ENCODE measurements at regions of chr9 and their contacts with region 1.

Region 1: GRCh38 chr9:71333321-71333720 is 211.9 kb upstream of the TRPM3 start:
- DNase-seq: no peak
- ATAC-seq: no peak
- H3K4me3 ChIP-seq: no peak overlapping the region
- H3K4me3 Mint-ChIP-seq: no peak overlapping the region
- H3K27ac ChIP-seq: no peak overlapping the region
- H3K27ac Mint-ChIP-seq: no peak overlapping the region
- H3K4me1 ChIP-seq: no peaks in the 10 kb centered on the region
- H3K4me1 Mint-ChIP-seq: no peaks in the 10 kb centered on the region
- H3K27me3 ChIP-seq: peaks cover 2 to 5% of the 10 kb centered on the region in 2 experiments
- H3K27me3 Mint-ChIP-seq: peaks cover 9% of the 10 kb centered on the region
- CTCF ChIP-seq: no peak

Region 2: DNA sequence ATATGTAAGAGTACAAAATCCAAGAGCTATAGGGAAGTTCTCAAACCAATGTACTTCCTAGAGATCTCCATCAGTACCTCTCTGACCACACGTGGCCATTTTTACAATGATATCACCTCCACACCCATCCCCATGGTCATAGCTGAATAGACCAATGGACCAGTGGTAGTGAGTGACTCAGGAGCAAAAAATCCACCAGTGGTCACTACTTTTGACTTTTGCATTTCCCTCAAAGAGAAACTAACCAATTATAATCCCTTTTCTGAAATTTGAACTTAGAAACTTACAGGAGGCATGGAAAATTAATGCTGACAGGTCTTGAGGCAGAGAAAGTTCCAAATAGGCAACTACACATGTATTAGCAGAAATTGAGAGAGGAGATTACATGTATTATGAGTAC is 450.3 kb before region 1 on chr9:
- CTCF ChIA-PET with region 1: no interaction called
- POLR2A ChIA-PET with region 1: no interaction called
- intact Hi-C with region 1: no loop called
- DNase-seq: no peak
- ATAC-seq: no peak
- H3K4me3 ChIP-seq: no peak overlapping the region
- H3K4me3 Mint-ChIP-seq: no peak overlapping the region
- H3K27ac ChIP-seq: no peak overlapping the region
- H3K27ac Mint-ChIP-seq: no peak overlapping the region
- H3K4me1 ChIP-seq: no peaks in the 10 kb centered on the region
- H3K4me1 Mint-ChIP-seq: no peaks in the 10 kb centered on the region
- H3K27me3 ChIP-seq: no peaks in the 10 kb centered on the region
- H3K27me3 Mint-ChIP-seq: no peaks in the 10 kb centered on the region
- CTCF ChIP-seq: no peak

Region 3: GRCh38 chr9:71302776-71303175 is 30.5 kb before region 1 on chr9:
- CTCF ChIA-PET with region 1: no interaction called
- POLR2A ChIA-PET with region 1: no interaction called
- intact Hi-C with region 1: no loop called
- DNase-seq: no peak
- ATAC-seq: no peak
- H3K4me3 ChIP-seq: no peak overlapping the region
- H3K4me3 Mint-ChIP-seq: no peak overlapping the region
- H3K27ac ChIP-seq: no peak overlapping the region
- H3K27ac Mint-ChIP-seq: no peak overlapping the region
- H3K4me1 ChIP-seq: no peaks in the 10 kb centered on the region
- H3K4me1 Mint-ChIP-seq: no peaks in the 10 kb centered on the region
- H3K27me3 ChIP-seq: no peaks in the 10 kb centered on the region
- H3K27me3 Mint-ChIP-seq: peaks cover 12% of the 10 kb centered on the region
- CTCF ChIP-seq: no peak

Region 4: DNA sequence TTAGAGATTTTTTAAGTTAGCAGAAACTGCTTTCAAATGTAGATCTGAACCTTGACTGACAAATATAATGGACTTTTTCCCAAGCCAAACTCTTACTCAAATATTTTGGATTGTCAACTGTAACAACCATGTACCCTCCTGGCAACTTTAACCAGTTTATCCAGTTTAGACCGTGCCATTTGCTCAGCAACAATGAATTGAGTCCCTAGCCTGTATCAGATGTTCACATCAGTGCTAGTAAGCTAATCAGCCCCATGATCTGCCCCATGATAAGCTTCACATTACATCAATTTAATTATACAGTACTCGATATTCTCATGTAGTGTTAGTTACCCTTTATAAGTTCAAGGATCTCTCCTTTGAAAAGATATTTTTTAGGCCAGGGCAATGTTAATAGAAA is 64.5 kb after region 1 on chr9:
- CTCF ChIA-PET with region 1: no interaction called
- POLR2A ChIA-PET with region 1: no interaction called
- intact Hi-C with region 1: loop called in 1 of 2 experiments (anchors 10 kb)
- DNase-seq: no peak
- ATAC-seq: no peak
- H3K4me3 ChIP-seq: no peak overlapping the region
- H3K4me3 Mint-ChIP-seq: no peak overlapping the region
- H3K27ac ChIP-seq: no peak overlapping the region
- H3K27ac Mint-ChIP-seq: no peak overlapping the region
- H3K4me1 ChIP-seq: no peaks in the 10 kb centered on the region
- H3K4me1 Mint-ChIP-seq: no peaks in the 10 kb centered on the region
- H3K27me3 ChIP-seq: no peaks in the 10 kb centered on the region
- H3K27me3 Mint-ChIP-seq: peaks cover 5% of the 10 kb centered on the region
- CTCF ChIP-seq: no peak

Measured in CD8-positive, alpha-beta T cell (primary cell).